Panc1 (cell line): ENCODE measurements at regions of chr2 and their contacts with region 1.

Region 1: GRCh38 chr2:130797493-130798435 is 39.0 kb upstream of the ARHGEF4 start:
- DNase-seq: peak; percentile 27
- ATAC-seq: peak; percentile 98
- H3K4me3 ChIP-seq: peak overlapping the region; percentile 77 to 78
- H3K27ac ChIP-seq: peak overlapping the region; percentile 68
- H3K4me1 ChIP-seq: no peaks in the 10 kb centered on the region
- H3K27me3 ChIP-seq: no peaks in the 10 kb centered on the region
- CTCF ChIP-seq: peak; percentile 98

Region 2: DNA sequence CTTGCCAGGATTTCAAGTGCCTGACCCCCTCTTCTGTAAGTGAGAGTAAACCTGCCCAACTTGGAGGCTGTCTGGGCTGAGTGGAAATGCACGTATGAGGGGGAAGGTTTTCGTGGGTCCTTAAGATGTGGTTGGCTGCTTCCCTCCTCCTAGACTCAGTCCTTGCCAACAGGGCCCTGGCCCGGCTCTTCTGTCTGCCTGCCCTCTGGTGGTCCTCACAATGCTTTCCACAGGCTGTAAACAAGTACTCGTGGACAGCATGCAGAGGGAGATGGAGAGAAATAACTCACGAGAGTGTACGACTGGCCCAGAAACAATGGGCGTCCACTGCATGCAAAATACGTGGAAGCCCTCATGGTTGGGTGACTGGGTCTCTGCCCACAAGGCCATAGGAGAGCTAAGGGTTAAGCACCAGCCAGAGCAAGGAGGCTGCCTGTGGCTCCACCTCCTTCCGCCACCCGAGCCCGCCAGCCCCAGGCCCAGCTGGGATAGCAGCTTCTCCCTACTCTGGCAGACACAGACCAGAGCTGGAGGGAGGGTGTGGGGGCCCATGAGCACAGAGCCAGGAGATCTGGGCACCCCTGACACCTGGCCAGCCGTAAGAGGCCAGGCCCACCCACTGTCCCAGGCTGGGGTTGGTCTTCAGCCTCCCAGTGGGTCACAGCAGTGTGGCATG is 22.0 kb after region 1 on chr2:
- CTCF ChIA-PET with region 1: interaction called, 11 read pairs
- POLR2A ChIA-PET with region 1: no interaction called
- in situ Hi-C with region 1: no loop called
- intact Hi-C with region 1: no loop called
- DNase-seq: no peak
- ATAC-seq: no peak
- H3K4me3 ChIP-seq: no peak overlapping the region
- H3K27ac ChIP-seq: no peak overlapping the region
- H3K4me1 ChIP-seq: no peaks in the 10 kb centered on the region
- H3K27me3 ChIP-seq: 0 out of 2 replicates have a peak, but pooled peaks cover 2% of the 10 kb centered on the region
- CTCF ChIP-seq: no peak

Region 3: GRCh38 chr2:130873700-130874346 is 76.1 kb after region 1 on chr2:
- CTCF ChIA-PET with region 1: interaction called, 12 read pairs
- POLR2A ChIA-PET with region 1: no interaction called
- in situ Hi-C with region 1: no loop called
- intact Hi-C with region 1: loop called (anchors 1 kb)
- DNase-seq: peak; percentile 30
- ATAC-seq: peak; percentile 89
- H3K4me3 ChIP-seq: no peak overlapping the region
- H3K27ac ChIP-seq: no peak overlapping the region
- H3K4me1 ChIP-seq: no peaks in the 10 kb centered on the region
- H3K27me3 ChIP-seq: no peaks in the 10 kb centered on the region
- CTCF ChIP-seq: peak; percentile 85

Region 4: GRCh38 chr2:130920415-130921163 is 122.8 kb after region 1 on chr2:
- CTCF ChIA-PET with region 1: interaction called, 7 read pairs
- POLR2A ChIA-PET with region 1: no interaction called
- in situ Hi-C with region 1: no loop called
- intact Hi-C with region 1: loop called (anchors 1 kb)
- DNase-seq: peak; percentile 54
- ATAC-seq: peak; percentile 87
- H3K4me3 ChIP-seq: no peak overlapping the region
- H3K27ac ChIP-seq: no peak overlapping the region
- H3K4me1 ChIP-seq: no peaks in the 10 kb centered on the region; the same call in 1 of the 2 replicates
- H3K27me3 ChIP-seq: 0 out of 2 replicates have a peak, but pooled peaks cover 1% of the 10 kb centered on the region
- CTCF ChIP-seq: peak; percentile 94